Endothelial cell of umbilical vein (primary cell): ENCODE measurements at regions of chr17 and their contacts with region 1.

Region 1: DNA sequence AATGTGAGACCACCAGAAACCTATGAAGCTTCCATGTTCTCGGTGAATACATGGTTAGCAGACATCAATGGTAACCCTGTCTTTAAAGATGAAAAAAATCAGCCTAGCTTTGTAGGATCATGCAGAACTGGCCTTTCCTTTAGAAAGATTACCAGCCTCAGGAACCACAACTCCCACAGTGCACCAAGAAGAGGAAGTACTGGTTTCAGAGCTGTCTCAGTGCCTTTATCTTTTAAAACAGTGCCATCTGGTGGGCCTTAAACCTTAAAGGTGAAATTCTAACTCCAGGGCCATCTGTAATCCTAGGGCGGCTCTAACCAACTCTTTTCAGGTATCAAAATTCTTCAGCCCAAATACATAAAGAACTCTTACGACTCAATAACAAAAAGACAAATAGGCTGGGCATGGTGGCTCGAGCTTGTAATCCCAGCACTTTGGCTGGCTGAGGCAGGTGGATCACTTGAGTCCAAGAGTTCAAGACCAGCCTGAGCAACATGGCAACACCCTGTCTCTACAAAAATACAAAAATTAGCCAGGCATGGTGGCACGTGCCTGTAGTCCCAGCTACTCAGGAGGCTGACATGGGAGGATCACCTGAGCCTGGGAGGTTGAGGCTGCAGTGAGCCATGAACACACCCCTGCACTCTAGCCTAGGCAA is 5.4 kb downstream of the ATPAF2 start:
- DNase-seq: peak; percentile 78
- H3K4me3 ChIP-seq: no peak overlapping the region
- H3K27ac ChIP-seq: no peak overlapping the region
- H3K4me1 ChIP-seq: peaks cover 21% of the 10 kb centered on the region
- H3K27me3 ChIP-seq: no peaks in the 10 kb centered on the region
- CTCF ChIP-seq: peak; percentile 46 to 55
- POLR2A ChIP-seq: no peak

Region 2: GRCh38 chr17:17859909-17860765 is 173.4 kb before region 1 on chr17:
- CTCF ChIA-PET with region 1: interaction called, 12 read pairs
- POLR2A ChIA-PET with region 1: no interaction called
- dilution Hi-C with region 1: no loop called
- intact Hi-C with region 1: no loop called
- DNase-seq: peak; percentile 59
- H3K4me3 ChIP-seq: no peak overlapping the region
- H3K27ac ChIP-seq: no peak overlapping the region
- H3K4me1 ChIP-seq: no peaks in the 10 kb centered on the region
- H3K27me3 ChIP-seq: no peaks in the 10 kb centered on the region
- CTCF ChIP-seq: peak; percentile 88 to 97
- POLR2A ChIP-seq: no peak

Region 3: DNA sequence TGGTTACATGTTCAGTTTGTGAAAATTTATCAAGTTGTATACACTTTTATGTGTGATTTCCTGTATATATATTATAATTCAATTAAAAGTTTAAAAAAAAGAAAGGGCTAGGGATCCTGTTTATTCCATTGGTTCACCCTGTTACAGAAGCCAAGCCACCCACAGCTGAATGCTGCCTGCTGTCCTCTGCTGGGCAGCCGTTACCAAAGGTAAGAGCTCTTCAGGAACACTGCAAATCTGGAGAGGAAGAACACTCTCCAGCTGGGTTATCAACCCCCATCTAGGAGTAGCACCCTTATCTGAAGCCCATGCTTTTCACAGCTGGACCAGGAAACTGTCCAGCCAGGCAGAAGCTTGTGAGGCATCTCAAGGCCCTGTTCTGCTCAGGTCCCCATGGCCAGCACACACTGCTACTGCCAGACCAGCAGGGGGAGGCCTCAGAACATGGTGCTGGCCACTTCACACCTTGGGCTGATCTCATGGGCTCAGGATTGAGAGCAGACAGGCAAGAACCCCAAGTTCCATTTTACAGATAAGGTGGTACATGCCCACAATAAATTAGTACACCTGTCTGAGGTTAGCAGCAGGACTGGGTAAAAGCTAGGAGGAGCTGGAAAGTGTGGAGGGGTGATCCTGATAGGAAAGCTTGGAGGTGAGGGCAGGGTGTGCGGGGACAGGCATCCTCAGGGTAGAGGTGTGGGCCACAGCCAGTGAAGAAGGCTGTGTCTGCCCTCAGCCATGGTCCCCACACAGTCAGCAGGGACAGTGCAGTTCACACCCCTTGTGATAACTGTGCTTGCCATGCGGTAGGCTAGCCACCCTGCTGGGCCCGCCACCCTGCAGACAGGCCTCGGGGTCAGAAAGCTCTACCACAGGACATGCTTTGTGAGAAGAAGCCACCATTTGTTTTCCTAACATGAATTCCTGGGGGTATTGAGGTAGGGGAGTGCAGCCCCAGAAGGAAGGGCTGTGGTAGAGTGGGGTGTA is 142.5 kb before region 1 on chr17:
- CTCF ChIA-PET with region 1: interaction called, 70 read pairs
- POLR2A ChIA-PET with region 1: no interaction called
- dilution Hi-C with region 1: loop called (anchors 25 kb)
- intact Hi-C with region 1: loop called (anchors 1 kb)
- DNase-seq: peak; percentile 66
- H3K4me3 ChIP-seq: no peak overlapping the region
- H3K27ac ChIP-seq: no peak overlapping the region
- H3K4me1 ChIP-seq: no peaks in the 10 kb centered on the region
- H3K27me3 ChIP-seq: no peaks in the 10 kb centered on the region
- CTCF ChIP-seq: peak; percentile 83 to 91
- POLR2A ChIP-seq: no peak

Region 4: GRCh38 chr17:17985555-17985954 is 48.0 kb before region 1 on chr17:
- CTCF ChIA-PET with region 1: interaction called, 21 read pairs
- POLR2A ChIA-PET with region 1: no interaction called
- dilution Hi-C with region 1: no loop called
- intact Hi-C with region 1: no loop called
- DNase-seq: no peak
- H3K4me3 ChIP-seq: no peak overlapping the region
- H3K27ac ChIP-seq: no peak overlapping the region
- H3K4me1 ChIP-seq: no peaks in the 10 kb centered on the region
- H3K27me3 ChIP-seq: no peaks in the 10 kb centered on the region
- CTCF ChIP-seq: peak in 1 of 2 donors; percentile 41
- POLR2A ChIP-seq: no peak

Region 5: DNA sequence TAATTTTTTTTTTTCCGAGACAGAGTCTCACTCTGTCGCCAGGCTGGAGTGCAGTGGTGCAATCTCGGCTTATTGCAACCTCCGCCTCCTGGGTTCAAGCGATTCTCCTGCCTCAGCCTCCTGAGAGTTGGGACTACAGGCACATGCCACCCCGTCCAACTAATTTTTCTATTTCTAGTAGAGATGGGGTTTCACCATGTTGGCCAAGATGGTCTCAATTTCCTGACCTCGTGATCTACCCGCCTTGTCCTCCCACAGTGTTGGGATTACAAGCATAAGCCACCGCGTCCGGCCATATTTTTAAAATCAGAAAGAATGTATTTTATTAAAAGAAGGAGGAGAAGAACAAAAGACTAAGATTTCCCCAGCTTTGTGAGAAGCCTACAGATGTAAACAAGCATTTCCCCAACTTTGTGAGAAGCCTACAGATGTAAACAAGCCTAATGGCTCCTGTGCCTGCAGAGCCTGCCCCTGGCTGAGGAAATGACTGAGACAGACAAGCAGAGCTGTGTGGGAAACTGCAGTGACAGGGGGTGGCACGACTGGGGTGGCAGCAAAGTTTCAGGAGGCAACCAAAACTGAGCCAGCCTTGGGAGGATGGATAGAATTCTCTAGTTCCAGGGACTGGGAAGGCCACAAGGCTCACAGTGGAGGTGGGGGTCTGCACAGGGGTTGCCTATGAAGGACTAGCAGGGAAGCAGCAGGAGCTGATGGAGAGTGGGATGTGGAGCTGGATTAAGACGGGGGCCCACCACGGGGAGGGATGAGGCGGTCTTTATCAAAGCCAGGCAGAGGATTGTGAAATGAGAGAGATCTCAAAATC is 258.4 kb after region 1 on chr17:
- CTCF ChIA-PET with region 1: no interaction called
- POLR2A ChIA-PET with region 1: no interaction called
- dilution Hi-C with region 1: no loop called
- intact Hi-C with region 1: no loop called
- DNase-seq: no peak
- H3K4me3 ChIP-seq: no peak overlapping the region
- H3K27ac ChIP-seq: no peak overlapping the region
- H3K4me1 ChIP-seq: no peaks in the 10 kb centered on the region
- H3K27me3 ChIP-seq: no peaks in the 10 kb centered on the region
- CTCF ChIP-seq: no peak
- POLR2A ChIP-seq: no peak